ENCODE measurements at regions of chr7 and their contacts with region 1.

Region 1: DNA sequence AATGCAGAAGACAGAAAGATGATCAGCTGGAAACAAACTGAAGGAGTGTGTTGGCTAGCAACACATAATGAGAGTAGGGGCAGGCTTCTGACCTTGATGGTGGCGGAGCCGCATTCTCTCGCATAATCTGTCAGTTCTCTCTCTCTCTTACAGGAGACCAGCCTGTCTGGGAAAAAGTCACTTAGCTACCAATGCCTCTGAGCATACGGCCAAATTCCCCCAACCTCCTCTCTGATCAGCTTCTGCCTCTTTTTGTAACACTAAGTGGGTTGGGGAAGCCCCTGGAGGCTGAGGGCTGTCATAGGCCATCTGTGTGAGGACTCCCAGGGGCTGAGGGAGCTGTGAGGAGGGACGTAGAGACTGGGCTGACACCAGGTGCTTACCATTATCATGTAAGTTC is 104.6 kb downstream of the HIPK2 start:
- DNase-seq: no peak
- ATAC-seq: no peak
- H3K4me3 ChIP-seq: no peak overlapping the region
- H3K27ac ChIP-seq: peak overlapping the region; percentile 87
- H3K4me1 ChIP-seq: peaks cover 60% of the 10 kb centered on the region
- H3K27me3 ChIP-seq: no peaks in the 10 kb centered on the region
- CTCF ChIP-seq: no peak
- EP300 ChIP-seq: no peak
- POLR2A ChIP-seq: no peak
- RAD21 ChIP-seq: no peak

Region 2: GRCh38 chr7:139640681-139641080 is 32.5 kb before region 1 on chr7:
- CTCF ChIA-PET with region 1: no interaction called
- POLR2A ChIA-PET with region 1: no interaction called
- in situ Hi-C with region 1: no loop called
- intact Hi-C with region 1: no loop called
- DNase-seq: no peak
- ATAC-seq: no peak
- H3K4me3 ChIP-seq: no peak overlapping the region
- H3K27ac ChIP-seq: no peak overlapping the region
- H3K4me1 ChIP-seq: peaks cover 16% of the 10 kb centered on the region; the same call in 1 of the 2 replicates
- H3K27me3 ChIP-seq: no peaks in the 10 kb centered on the region
- CTCF ChIP-seq: no peak
- EP300 ChIP-seq: no peak
- POLR2A ChIP-seq: no peak
- RAD21 ChIP-seq: no peak

Region 3: GRCh38 chr7:139660317-139661042 is 12.8 kb before region 1 on chr7:
- CTCF ChIA-PET with region 1: no interaction called
- POLR2A ChIA-PET with region 1: interaction called, 15 read pairs
- in situ Hi-C with region 1: no loop called
- intact Hi-C with region 1: loop called (anchors 1 kb)
- DNase-seq: peak; percentile 90
- ATAC-seq: peak; percentile 75
- H3K4me3 ChIP-seq: no peak overlapping the region; a peak in 1 of 6 replicates
- H3K27ac ChIP-seq: peak overlapping the region; percentile 84
- H3K4me1 ChIP-seq: peaks cover 87% of the 10 kb centered on the region
- H3K27me3 ChIP-seq: no peaks in the 10 kb centered on the region
- CTCF ChIP-seq: no peak
- EP300 ChIP-seq: peak in 1 of 2 experiments; percentile 77; a peak in 2 of 4 replicates
- POLR2A ChIP-seq: no peak
- RAD21 ChIP-seq: no peak

Region 4: GRCh38 chr7:139875821-139876241 is 202.6 kb after region 1 on chr7:
- CTCF ChIA-PET with region 1: no interaction called
- POLR2A ChIA-PET with region 1: no interaction called
- in situ Hi-C with region 1: no loop called
- intact Hi-C with region 1: no loop called
- DNase-seq: no peak
- ATAC-seq: peak; percentile 56
- H3K4me3 ChIP-seq: no peak overlapping the region
- H3K27ac ChIP-seq: no peak overlapping the region
- H3K4me1 ChIP-seq: peaks cover 4% of the 10 kb centered on the region; the same call in 1 of the 2 replicates
- H3K27me3 ChIP-seq: no peaks in the 10 kb centered on the region
- CTCF ChIP-seq: no peak
- EP300 ChIP-seq: no peak
- POLR2A ChIP-seq: no peak
- RAD21 ChIP-seq: no peak

Measured in HepG2 (cell line).